ENCODE measurements at regions of chr6 and their contacts with region 1.

Region 1: DNA sequence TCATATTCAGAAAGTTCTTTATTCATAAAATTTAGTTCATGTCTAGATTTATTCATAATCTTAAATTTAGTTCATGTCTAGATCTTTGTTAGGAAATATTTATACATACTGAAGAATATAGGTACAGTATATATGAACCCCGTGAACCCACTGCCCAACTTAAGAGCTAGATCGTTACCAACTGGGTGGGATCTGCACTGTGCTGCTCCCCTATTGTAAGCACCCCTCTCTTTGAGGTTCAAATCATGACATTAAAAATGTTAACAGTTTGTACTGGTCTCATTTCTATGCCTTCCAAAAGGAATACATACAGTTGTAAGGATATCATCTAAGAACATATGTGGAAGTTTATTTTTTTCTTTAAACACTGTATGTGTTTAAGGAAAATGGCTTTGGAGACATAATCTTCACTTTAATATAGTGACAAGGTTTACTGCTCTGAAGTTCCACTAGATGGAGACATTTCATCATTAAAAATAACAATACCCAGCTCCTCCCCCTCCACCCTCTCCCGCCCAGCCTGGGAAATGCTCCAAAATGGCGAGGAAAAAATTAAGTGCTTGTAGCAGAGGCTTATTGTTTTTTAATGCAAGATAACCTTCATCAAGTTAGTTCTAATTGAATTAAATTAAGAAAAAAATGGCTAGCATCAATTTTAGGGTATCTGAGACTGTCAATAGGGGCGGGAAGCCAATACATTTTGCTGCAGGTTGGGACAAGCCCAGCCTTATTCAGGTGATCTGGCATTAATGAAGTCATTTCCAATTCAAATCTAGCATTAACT is 104.1 kb upstream of the TRAF3IP2 start:
- DNase-seq: peak; percentile 69 to 86 (median 85)
- ATAC-seq: peak; percentile 98
- H3K4me3 ChIP-seq: no peak overlapping the region
- H3K27ac ChIP-seq: no peak overlapping the region
- H3K4me1 ChIP-seq: no peaks in the 10 kb centered on the region
- H3K27me3 ChIP-seq: peaks cover 3 to 13% of the 10 kb centered on the region in 2 experiments; a peak in 2 of 5 replicates
- CTCF ChIP-seq: peak; percentile 64 to 90 (median 72)
- EP300 ChIP-seq: no peak
- POLR2A ChIP-seq: no peak
- RAD21 ChIP-seq: peak; percentile 85 to 95

Region 2: GRCh38 chr6:111873178-111874024 is 163.6 kb after region 1 on chr6 and contains the start of gene FYN:
- CTCF ChIA-PET with region 1: no interaction called
- POLR2A ChIA-PET with region 1: no interaction called
- in situ Hi-C with region 1: no loop called
- intact Hi-C with region 1: loop called (anchors 5 kb)
- DNase-seq: peak; percentile 97 to 99 (median 99)
- ATAC-seq: peak; percentile 99
- H3K4me3 ChIP-seq: peak within 1 kb of the TSS; percentile 58
- H3K27ac ChIP-seq: no peak within 1 kb of the TSS
- H3K4me1 ChIP-seq: peaks cover 20 to 30% of the 10 kb centered on the region in 2 experiments
- H3K27me3 ChIP-seq: peaks cover 5 to 9% of the 10 kb centered on the region in 2 experiments; a peak in 3 of 5 replicates
- CTCF ChIP-seq: peak in 2 of 3 experiments; percentile 30 to 42; a peak in 4 of 6 replicates
- EP300 ChIP-seq: no peak
- POLR2A ChIP-seq: no peak
- RAD21 ChIP-seq: no peak; a peak in 1 of 4 replicates
- polyA plus RNA-seq, gene FYN: 2.9 to 5.0 TPM

Region 3: DNA sequence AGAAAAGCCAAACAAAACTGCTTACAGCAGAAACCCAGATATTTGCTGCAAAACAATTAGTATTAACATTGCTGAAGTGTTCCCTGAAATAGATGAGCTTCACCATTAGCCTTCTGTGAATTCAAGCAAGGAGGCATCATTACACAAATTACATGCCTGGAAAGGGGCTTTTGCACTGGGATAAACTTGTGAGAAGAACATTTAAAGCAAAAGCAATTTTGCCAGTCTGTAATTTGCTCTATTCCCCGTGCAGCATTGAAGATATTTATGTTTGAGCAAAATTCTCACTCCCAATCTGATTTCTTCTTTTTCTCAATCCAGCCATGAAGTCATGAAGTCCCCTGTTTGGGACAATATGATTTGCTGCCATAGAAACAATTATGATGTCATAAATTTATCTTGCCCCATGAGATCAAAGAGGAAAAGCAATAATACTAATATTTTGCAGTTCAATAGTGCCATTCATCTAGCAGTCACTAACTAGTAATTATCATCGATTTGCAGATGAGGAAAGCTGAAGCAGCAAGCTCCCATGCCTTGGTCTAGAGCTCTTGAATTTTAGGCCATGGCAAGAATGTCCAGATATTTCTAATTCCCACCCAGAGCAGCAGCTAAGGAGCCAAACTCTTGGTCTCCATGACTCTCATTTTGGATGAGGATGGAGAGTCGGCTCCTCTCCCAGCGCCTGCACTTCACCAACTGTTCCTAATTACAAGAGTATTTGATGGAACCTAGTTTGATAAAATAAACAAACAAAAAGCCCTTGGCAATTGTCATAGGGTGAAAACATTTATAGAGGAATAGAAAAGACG is 294.6 kb after region 1 on chr6:
- CTCF ChIA-PET with region 1: no interaction called
- POLR2A ChIA-PET with region 1: no interaction called
- in situ Hi-C with region 1: loop called (anchors 5 kb)
- intact Hi-C with region 1: no loop called
- DNase-seq: no peak
- ATAC-seq: no peak
- H3K4me3 ChIP-seq: no peak overlapping the region
- H3K27ac ChIP-seq: no peak overlapping the region
- H3K4me1 ChIP-seq: no peaks in the 10 kb centered on the region
- H3K27me3 ChIP-seq: peaks cover 0 to 13% of the 10 kb centered on the region in 2 experiments; a peak in 2 of 5 replicates
- CTCF ChIP-seq: no peak
- EP300 ChIP-seq: no peak
- POLR2A ChIP-seq: no peak
- RAD21 ChIP-seq: no peak

Region 4: GRCh38 chr6:112149719-112150263 is 440.0 kb after region 1 on chr6:
- CTCF ChIA-PET with region 1: no interaction called
- POLR2A ChIA-PET with region 1: interaction called, 3 read pairs
- in situ Hi-C with region 1: loop called (anchors 10 kb)
- intact Hi-C with region 1: no loop called
- DNase-seq: no peak
- ATAC-seq: no peak
- H3K4me3 ChIP-seq: no peak overlapping the region
- H3K27ac ChIP-seq: no peak overlapping the region
- H3K4me1 ChIP-seq: no peaks in the 10 kb centered on the region
- H3K27me3 ChIP-seq: peaks cover 0 to 6% of the 10 kb centered on the region in 2 experiments; a peak in 3 of 5 replicates
- CTCF ChIP-seq: no peak
- EP300 ChIP-seq: no peak
- POLR2A ChIP-seq: no peak
- RAD21 ChIP-seq: no peak

Region 5: DNA sequence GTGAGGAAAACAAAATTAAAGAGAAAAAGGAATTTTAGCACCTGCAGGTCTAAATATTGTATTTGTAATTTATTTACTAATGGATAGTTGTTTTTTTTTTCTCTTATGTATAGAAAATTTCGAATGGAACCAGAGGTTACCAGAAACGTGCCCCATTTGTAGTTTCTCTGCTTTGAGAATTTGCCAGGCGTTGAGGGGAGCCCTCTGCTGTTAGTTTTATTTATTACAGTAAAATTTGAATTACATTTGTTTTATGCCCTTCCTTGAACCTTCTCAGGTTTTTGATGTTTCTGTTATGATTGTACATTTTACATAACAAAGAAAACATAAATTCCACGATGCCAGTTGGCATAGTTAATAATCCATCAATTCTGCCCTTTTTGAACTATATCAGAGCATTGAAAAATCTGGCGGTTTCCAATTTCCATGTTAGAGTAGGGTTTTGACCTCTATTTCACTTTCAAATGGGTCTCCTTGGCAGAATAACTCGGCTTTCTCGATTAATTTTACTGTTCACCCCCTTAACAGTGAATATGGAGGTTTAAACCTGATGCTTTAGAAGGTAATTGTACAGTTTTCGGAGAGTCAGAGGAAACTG is 602.2 kb after region 1 on chr6:
- CTCF ChIA-PET with region 1: interaction called, 3 read pairs
- POLR2A ChIA-PET with region 1: no interaction called
- in situ Hi-C with region 1: loop called (anchors 25 kb)
- intact Hi-C with region 1: no loop called
- DNase-seq: peak; percentile 18 to 40 (median 35)
- ATAC-seq: no peak
- H3K4me3 ChIP-seq: no peak overlapping the region
- H3K27ac ChIP-seq: no peak overlapping the region
- H3K4me1 ChIP-seq: no peaks in the 10 kb centered on the region
- H3K27me3 ChIP-seq: peaks cover 0 to 2% of the 10 kb centered on the region in 2 experiments; a peak in 1 of 5 replicates
- CTCF ChIP-seq: peak; percentile 40 to 66 (median 52); a peak in 5 of 6 replicates
- EP300 ChIP-seq: no peak
- POLR2A ChIP-seq: no peak
- RAD21 ChIP-seq: peak; percentile 59 to 67